Activated CD8-positive, alpha-beta memory T cell treated with anti-CD3 and anti-CD28 coated beads, Interleukin-2, amount 10 ng/mL, durations not matched to agents 7 days and 5 days (primary cell): ENCODE measurements at regions of chr1 and their contacts with region 1.

Region 1: GRCh38 chr1:156104065-156104810 is 10.3 kb upstream of the LMNA start:
- DNase-seq: no peak
- ATAC-seq: no peak
- H3K4me3 Mint-ChIP-seq: no peak overlapping the region
- H3K27ac Mint-ChIP-seq: peak overlapping the region; percentile 65
- H3K4me1 Mint-ChIP-seq: peaks cover 33% of the 10 kb centered on the region
- H3K27me3 Mint-ChIP-seq: peaks cover 12% of the 10 kb centered on the region

Region 2: DNA sequence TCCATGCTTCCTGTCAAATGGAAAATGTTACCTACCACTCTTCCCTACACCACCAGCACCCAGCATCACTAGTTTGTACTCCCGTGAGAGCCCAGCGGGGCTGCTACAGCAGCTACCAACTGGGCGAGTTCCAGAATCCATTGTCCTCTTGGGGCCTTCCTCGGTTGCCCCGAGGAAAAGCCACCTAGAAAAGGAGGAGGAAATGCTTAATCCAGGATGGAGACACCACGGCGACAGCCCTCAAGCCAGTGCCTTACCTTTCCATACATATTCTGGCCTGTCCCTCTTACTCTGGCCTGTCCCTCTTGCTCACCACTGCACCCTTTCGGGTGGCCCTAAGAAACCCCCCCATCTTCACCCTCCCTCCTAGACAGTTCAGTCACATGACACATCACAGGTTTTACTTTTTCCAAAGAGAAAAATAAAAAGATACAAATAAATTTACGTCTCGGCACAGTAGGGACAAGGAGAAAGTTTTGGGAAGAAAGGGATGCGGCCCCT is 193.6 kb before region 1 on chr1:
- CTCF ChIA-PET with region 1: no interaction called
- DNase-seq: peak; percentile 46
- ATAC-seq: peak; percentile 28
- H3K4me3 Mint-ChIP-seq: peak overlapping the region; percentile 90
- H3K27ac Mint-ChIP-seq: peak overlapping the region; percentile 95
- H3K4me1 Mint-ChIP-seq: peaks cover 26% of the 10 kb centered on the region
- H3K27me3 Mint-ChIP-seq: no peaks in the 10 kb centered on the region

Region 3: GRCh38 chr1:156090822-156091188 is 13.4 kb before region 1 on chr1:
- CTCF ChIA-PET with region 1: interaction called, 51 read pairs
- DNase-seq: peak; percentile 91
- ATAC-seq: peak; percentile 99
- H3K4me3 Mint-ChIP-seq: no peak overlapping the region
- H3K27ac Mint-ChIP-seq: no peak overlapping the region
- H3K4me1 Mint-ChIP-seq: peaks cover 12% of the 10 kb centered on the region
- H3K27me3 Mint-ChIP-seq: peaks cover 34% of the 10 kb centered on the region

Region 4: GRCh38 chr1:156160743-156161171 is 56.5 kb after region 1 on chr1:
- CTCF ChIA-PET with region 1: no interaction called
- DNase-seq: peak; percentile 77
- ATAC-seq: peak; percentile 90
- H3K4me3 Mint-ChIP-seq: peak overlapping the region; percentile 54
- H3K27ac Mint-ChIP-seq: peak overlapping the region; percentile 38
- H3K4me1 Mint-ChIP-seq: peaks cover 49% of the 10 kb centered on the region
- H3K27me3 Mint-ChIP-seq: no peaks in the 10 kb centered on the region